ENCODE measurements at regions of chr1 and their contacts with region 1.

Region 1: GRCh38 chr1:177948336-177948972 is 21.4 kb downstream of the SEC16B start:
- DNase-seq: peak; percentile 34 to 58
- ATAC-seq: peak; percentile 76 to 95 (median 82)
- H3K4me3 ChIP-seq: no peak overlapping the region
- H3K27ac ChIP-seq: no peak overlapping the region
- H3K4me1 ChIP-seq: no peaks in the 10 kb centered on the region
- H3K27me3 ChIP-seq: no peaks in the 10 kb centered on the region
- CTCF ChIP-seq: peak; percentile 91

Region 2: DNA sequence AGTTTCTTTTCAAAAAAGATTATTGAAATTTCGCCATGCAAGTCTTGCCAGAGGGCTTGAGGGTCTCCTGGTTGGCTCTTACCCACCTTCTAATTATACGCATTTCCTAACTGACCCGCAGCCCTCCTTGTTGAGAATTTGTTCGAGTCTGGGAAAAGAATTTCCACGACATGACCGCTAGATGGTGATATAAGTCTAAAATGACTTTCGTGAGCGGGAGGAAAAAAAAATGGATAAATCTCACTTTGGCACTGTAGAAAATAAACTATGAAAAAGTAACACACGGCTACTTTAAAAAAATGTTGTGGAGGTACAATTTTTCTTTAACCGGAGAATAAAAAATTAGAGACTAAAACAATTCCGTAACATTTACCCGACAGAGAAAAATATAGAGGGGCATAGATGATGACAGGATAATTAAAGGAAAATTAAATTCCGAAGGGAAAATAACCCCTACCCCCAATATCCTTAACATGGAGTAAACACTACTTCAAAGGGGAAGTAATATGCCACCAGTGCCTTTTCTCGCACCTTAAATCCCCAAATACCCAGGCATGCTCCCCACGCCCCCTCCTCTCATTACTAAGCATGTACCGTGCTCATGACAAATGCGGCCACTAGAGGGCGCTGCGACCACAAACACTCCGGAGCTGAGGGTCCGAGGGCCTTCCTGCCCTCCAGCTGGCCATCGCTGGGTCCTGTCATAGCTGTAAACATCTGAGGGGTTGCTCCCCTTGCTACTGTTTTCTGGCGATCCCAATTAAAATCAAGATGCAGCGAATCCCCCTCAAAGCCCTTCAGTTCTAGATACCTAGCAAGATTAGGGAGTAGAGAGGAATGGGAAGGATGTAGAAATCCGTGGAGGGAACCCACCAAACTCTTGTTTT is 1050.9 kb before region 1 on chr1:
- intact Hi-C with region 1: loop called (anchors 2 to 5 kb)
- DNase-seq: peak; percentile 46 to 72
- ATAC-seq: peak; percentile 67 to 86 (median 73)
- H3K4me3 ChIP-seq: peak overlapping the region; percentile 45
- H3K27ac ChIP-seq: no peak overlapping the region
- H3K4me1 ChIP-seq: peaks cover 4% of the 10 kb centered on the region
- H3K27me3 ChIP-seq: peaks cover 0 to 24% (median 7%) of the 10 kb centered on the region in 3 donors
- CTCF ChIP-seq: peak; percentile 63

Region 3: GRCh38 chr1:177256153-177257075 is 692.0 kb before region 1 on chr1:
- intact Hi-C with region 1: loop called in 1 of 2 experiments (anchors 5 kb)
- DNase-seq: peak; percentile 57 to 81
- ATAC-seq: peak; percentile 89 to 98 (median 92)
- H3K4me3 ChIP-seq: no peak overlapping the region
- H3K27ac ChIP-seq: no peak overlapping the region
- H3K4me1 ChIP-seq: peaks cover 5% of the 10 kb centered on the region
- H3K27me3 ChIP-seq: no peaks in the 10 kb centered on the region
- CTCF ChIP-seq: peak; percentile 79

Region 4: DNA sequence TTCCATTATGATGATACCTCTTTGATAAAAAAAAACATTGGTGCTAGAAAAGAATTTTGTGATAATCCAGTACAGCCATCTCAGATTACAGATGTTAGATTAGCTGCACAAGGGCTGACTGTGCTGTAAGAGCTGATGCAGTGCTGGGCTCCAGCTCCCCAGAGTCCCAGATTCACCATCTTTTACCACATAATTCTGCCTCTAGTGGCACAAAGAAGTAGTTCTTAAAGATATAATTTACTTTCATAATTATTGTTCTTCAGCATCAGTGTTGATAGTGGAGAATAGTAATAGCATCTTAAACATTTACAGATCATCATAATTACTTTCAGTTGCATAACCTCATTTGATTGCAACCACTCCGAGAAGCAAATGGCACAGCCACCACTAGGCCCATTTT is 515.6 kb before region 1 on chr1:
- intact Hi-C with region 1: loop called in 1 of 2 experiments (anchors 5 kb)
- DNase-seq: no peak
- ATAC-seq: no peak
- H3K4me3 ChIP-seq: no peak overlapping the region
- H3K27ac ChIP-seq: no peak overlapping the region
- H3K4me1 ChIP-seq: no peaks in the 10 kb centered on the region
- H3K27me3 ChIP-seq: peaks cover 0 to 2% (median 2%) of the 10 kb centered on the region in 3 donors
- CTCF ChIP-seq: no peak

Region 5: GRCh38 chr1:177780096-177780700 is 168.3 kb before region 1 on chr1:
- intact Hi-C with region 1: loop called in 1 of 2 experiments (anchors 10 kb)
- DNase-seq: no peak
- ATAC-seq: peak; percentile 84 to 98 (median 88)
- H3K4me3 ChIP-seq: no peak overlapping the region
- H3K27ac ChIP-seq: no peak overlapping the region
- H3K4me1 ChIP-seq: no peaks in the 10 kb centered on the region
- H3K27me3 ChIP-seq: no peaks in the 10 kb centered on the region
- CTCF ChIP-seq: peak; percentile 60

Region 6: DNA sequence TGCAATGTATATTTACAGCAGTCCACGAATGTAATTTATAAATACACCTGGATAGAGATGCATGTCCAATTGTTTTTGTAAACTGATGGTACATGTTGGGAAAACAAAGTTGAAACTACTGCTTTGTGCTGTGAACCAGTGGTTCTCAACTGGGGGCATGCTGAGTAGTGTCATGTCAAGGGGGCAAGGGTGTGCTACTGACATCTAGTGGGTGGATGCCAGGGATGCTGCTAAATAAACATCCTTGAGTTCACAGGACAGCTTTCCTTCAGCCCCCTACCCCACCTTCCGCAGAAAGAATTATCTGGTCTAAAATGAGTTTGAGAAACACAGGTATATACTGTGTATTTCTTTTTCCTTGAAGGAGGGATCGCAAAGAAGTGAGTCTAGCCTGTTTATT is 241.4 kb after region 1 on chr1:
- intact Hi-C with region 1: loop called in 1 of 2 experiments (anchors 10 kb)
- DNase-seq: no peak
- ATAC-seq: peak in 3 of 4 donors; percentile 42 to 73 (median 62)
- H3K4me3 ChIP-seq: no peak overlapping the region
- H3K27ac ChIP-seq: no peak overlapping the region
- H3K4me1 ChIP-seq: no peaks in the 10 kb centered on the region
- H3K27me3 ChIP-seq: no peaks in the 10 kb centered on the region
- CTCF ChIP-seq: peak; percentile 42

Region 7: DNA sequence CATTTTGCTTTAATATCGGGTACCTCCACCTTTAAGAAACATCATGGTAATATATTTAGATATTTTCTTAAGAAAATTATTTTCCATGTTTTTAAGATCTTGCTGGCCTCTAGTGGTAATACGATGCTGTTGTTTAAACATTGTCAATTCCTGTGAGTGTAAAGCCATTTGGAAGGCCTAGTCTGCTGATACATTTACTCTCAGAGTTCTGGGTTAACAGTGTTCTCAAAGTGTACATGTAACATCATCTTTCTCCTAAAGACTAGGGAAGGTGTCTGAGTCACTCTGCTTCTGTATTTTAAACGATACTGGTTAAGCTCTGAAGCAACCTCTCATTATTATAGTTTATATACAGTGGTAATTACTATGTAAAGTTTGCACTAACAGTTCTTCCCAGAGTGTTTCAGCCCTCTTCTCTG is 334.5 kb after region 1 on chr1:
- intact Hi-C with region 1: loop called (anchors 5 to 10 kb)
- DNase-seq: no peak
- ATAC-seq: peak in 1 of 4 donors; percentile 37
- H3K4me3 ChIP-seq: no peak overlapping the region
- H3K27ac ChIP-seq: no peak overlapping the region
- H3K4me1 ChIP-seq: no peaks in the 10 kb centered on the region
- H3K27me3 ChIP-seq: no peaks in the 10 kb centered on the region
- CTCF ChIP-seq: peak; percentile 46

Measured in psoas muscle (tissue), 8 donors.